B cell (primary cell): ENCODE measurements at regions of chr4 and their contacts with region 1.

Region 1: GRCh38 chr4:140807491-140808252 is 51.5 kb upstream of the TBC1D9 start:
- DNase-seq: peak; percentile 80
- ATAC-seq: peak; percentile 84
- H3K4me3 ChIP-seq: peak overlapping the region in 2 of 5 experiments; percentile 10 to 50
- H3K4me3 Mint-ChIP-seq: peak overlapping the region; percentile 70
- H3K27ac ChIP-seq: peak overlapping the region; percentile 82 to 83
- H3K27ac Mint-ChIP-seq: peak overlapping the region; percentile 97
- H3K4me1 ChIP-seq: peaks cover 85 to 92% of the 10 kb centered on the region in 2 donors
- H3K4me1 Mint-ChIP-seq: peaks cover 83% of the 10 kb centered on the region
- H3K27me3 ChIP-seq: no peaks in the 10 kb centered on the region
- H3K27me3 Mint-ChIP-seq: no peaks in the 10 kb centered on the region
- CTCF ChIP-seq: no peak

Region 2: GRCh38 chr4:140720387-140721304 is 87.0 kb before region 1 on chr4:
- CTCF ChIA-PET with region 1: interaction called, 3 read pairs
- POLR2A ChIA-PET with region 1: interaction called, 8 read pairs
- intact Hi-C with region 1: loop called (anchors 5 kb)
- DNase-seq: peak; percentile 75
- ATAC-seq: peak; percentile 63
- H3K4me3 ChIP-seq: peak overlapping the region; percentile 40 to 68 (median 54)
- H3K4me3 Mint-ChIP-seq: peak overlapping the region; percentile 89
- H3K27ac ChIP-seq: peak overlapping the region; percentile 92
- H3K27ac Mint-ChIP-seq: peak overlapping the region; percentile 99
- H3K4me1 ChIP-seq: peaks cover 75 to 76% of the 10 kb centered on the region in 2 donors
- H3K4me1 Mint-ChIP-seq: peaks cover 85% of the 10 kb centered on the region
- H3K27me3 ChIP-seq: no peaks in the 10 kb centered on the region
- H3K27me3 Mint-ChIP-seq: no peaks in the 10 kb centered on the region
- CTCF ChIP-seq: no peak